Sigmoid colon (tissue), 7 donors: ENCODE measurements at regions of chr5 and their contacts with region 1.

Region 1: DNA sequence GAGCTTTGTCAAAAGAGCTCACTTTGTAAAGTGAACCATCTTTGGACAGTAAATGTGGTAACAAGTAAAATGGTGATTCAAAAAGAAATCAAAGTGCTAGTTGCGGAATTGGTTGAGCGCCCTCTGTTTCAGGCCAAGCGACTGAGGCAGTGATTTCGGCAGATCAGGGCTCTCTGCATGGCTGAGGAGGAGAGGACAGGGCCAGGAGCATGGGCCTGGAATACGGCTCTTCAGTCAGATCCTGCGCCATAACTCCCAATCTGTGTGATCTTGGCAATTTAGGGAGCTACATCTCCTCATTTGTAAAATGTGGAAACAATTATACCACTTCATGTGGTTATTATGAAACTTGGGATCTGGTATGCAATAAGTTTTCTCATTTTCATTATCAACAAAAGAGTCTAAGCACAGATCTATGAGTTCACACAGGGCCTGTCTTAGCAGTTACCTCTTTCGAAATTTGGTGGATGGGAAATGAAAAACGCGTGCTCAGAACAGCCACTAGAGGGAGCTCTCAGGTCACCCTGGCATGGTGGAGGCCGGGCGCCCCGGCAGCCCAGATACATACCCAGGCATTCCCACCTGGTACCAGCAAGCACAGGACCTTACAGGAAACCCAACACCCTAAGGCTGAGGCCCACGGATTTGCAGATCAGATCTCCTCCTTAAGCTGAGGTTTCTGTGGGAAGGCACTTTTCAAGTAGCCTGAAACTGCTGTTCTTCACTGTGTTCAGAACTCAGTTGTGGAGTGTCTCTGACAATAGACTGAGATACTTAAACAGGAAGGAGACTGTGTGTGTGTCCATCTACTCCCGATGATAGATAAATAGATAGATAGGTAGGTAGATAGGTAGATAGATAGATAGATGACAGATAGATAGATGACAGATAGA is 303.7 kb downstream of the RAB3C start:
- DNase-seq: peak; percentile 81
- H3K4me3 ChIP-seq: no peak overlapping the region
- H3K27ac ChIP-seq: peak overlapping the region in 2 of 4 donors; percentile 4 to 20
- H3K4me1 ChIP-seq: peaks cover 0 to 12% (median 3%) of the 10 kb centered on the region in 4 donors
- H3K27me3 ChIP-seq: no peaks in the 10 kb centered on the region
- CTCF ChIP-seq: peak; percentile 62 to 94 (median 68)
- EP300 ChIP-seq: no peak
- POLR2A ChIP-seq: no peak

Region 2: GRCh38 chr5:58988938-58989337 is 102.4 kb after region 1 on chr5:
- intact Hi-C with region 1: loop called (anchors 5 kb)
- DNase-seq: no peak
- H3K4me3 ChIP-seq: no peak overlapping the region
- H3K27ac ChIP-seq: no peak overlapping the region
- H3K4me1 ChIP-seq: peaks cover 0 to 13% (median 0%) of the 10 kb centered on the region in 4 donors
- H3K27me3 ChIP-seq: no peaks in the 10 kb centered on the region
- CTCF ChIP-seq: no peak
- EP300 ChIP-seq: no peak
- POLR2A ChIP-seq: no peak

Region 3: DNA sequence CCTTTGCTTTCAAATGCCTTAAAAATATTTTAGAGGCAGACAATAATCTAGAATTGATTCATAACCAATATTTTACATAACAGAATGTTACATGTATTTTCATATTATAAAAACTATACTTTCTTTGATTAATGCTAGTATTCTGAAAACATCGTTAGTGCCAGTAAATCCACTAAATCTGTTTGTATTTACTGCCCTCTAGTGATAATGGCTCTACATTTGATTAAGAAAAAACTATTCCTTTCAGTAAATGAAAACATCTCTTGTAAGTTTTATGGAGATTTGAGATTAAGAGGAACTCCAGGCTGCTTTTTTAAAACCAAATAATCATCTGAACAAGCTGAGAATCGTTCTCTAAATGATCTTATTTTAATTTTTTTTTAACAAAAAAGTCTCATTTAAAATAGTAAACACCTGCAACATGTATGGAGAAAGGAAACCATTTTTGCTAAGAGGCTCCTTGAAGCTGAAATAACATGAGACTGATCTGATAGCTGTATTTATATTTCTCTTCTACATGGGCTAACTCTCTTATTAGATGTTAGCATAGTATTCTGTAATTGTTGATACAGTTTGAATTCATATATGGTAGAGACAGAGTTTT is 121.0 kb after region 1 on chr5:
- intact Hi-C with region 1: loop called (anchors 5 kb)
- DNase-seq: no peak
- H3K4me3 ChIP-seq: no peak overlapping the region
- H3K27ac ChIP-seq: peak overlapping the region in 2 of 4 donors; percentile 0 to 44
- H3K4me1 ChIP-seq: peaks cover 0 to 55% (median 47%) of the 10 kb centered on the region in 4 donors
- H3K27me3 ChIP-seq: no peaks in the 10 kb centered on the region
- CTCF ChIP-seq: peak in 1 of 4 experiments; percentile 15
- EP300 ChIP-seq: no peak
- POLR2A ChIP-seq: no peak

Region 4: GRCh38 chr5:59174248-59174844 is 287.8 kb after region 1 on chr5:
- intact Hi-C with region 1: loop called (anchors 2 kb)
- DNase-seq: no peak
- H3K4me3 ChIP-seq: no peak overlapping the region
- H3K27ac ChIP-seq: peak overlapping the region in 2 of 4 donors; percentile 8 to 26
- H3K4me1 ChIP-seq: peaks cover 0 to 22% (median 19%) of the 10 kb centered on the region in 4 donors
- H3K27me3 ChIP-seq: no peaks in the 10 kb centered on the region
- CTCF ChIP-seq: peak; percentile 57 to 73 (median 64)
- EP300 ChIP-seq: no peak
- POLR2A ChIP-seq: no peak

Region 5: DNA sequence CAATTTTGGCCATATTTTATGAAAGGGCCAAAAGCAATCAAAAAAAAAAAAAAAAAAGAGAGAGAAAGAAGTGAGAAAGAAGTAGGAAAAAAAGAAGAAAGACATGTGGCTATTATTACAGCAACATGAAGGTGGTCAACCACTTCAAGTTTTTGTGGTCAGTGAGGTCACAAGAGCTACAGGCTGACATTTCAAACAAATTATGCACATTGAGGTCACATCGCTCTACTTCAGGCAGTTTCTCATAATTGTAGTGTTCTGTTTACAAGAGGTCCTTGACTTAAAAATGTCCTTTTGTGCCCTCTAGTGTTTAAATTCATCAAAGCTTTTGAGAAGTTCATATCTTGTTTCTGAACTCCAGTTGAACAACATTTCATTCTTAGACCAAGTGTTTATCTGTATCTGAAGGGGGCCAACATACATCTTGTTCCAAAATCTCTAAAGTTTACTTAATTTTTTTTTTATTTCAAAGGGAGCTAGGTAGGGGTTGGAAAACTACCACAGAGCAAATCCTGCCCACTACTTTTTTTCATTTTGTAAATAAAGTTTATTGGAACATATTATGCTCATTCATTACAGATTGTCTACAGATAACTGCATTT is 493.9 kb after region 1 on chr5:
- intact Hi-C with region 1: loop called (anchors 5 kb)
- DNase-seq: no peak
- H3K4me3 ChIP-seq: no peak overlapping the region
- H3K27ac ChIP-seq: peak overlapping the region in 3 of 4 donors; percentile 50 to 62 (median 60)
- H3K4me1 ChIP-seq: peaks cover 0 to 20% (median 11%) of the 10 kb centered on the region in 4 donors
- H3K27me3 ChIP-seq: no peaks in the 10 kb centered on the region
- CTCF ChIP-seq: peak; percentile 32 to 59 (median 42)
- EP300 ChIP-seq: no peak
- POLR2A ChIP-seq: no peak

Region 6: GRCh38 chr5:59673438-59674058 is 787.0 kb after region 1 on chr5:
- intact Hi-C with region 1: loop called (anchors 10 kb)
- DNase-seq: no peak
- H3K4me3 ChIP-seq: no peak overlapping the region
- H3K27ac ChIP-seq: no peak overlapping the region
- H3K4me1 ChIP-seq: peaks cover 0 to 26% (median 11%) of the 10 kb centered on the region in 4 donors
- H3K27me3 ChIP-seq: no peaks in the 10 kb centered on the region
- CTCF ChIP-seq: peak; percentile 56 to 81 (median 74)
- EP300 ChIP-seq: no peak
- POLR2A ChIP-seq: no peak

Region 7: GRCh38 chr5:59799668-59800346 is 913.2 kb after region 1 on chr5:
- intact Hi-C with region 1: loop called (anchors 5 kb)
- DNase-seq: no peak
- H3K4me3 ChIP-seq: peak overlapping the region in 1 of 4 donors; percentile 22
- H3K27ac ChIP-seq: peak overlapping the region in 3 of 4 donors; percentile 59 to 74 (median 64)
- H3K4me1 ChIP-seq: peaks cover 0 to 28% (median 27%) of the 10 kb centered on the region in 4 donors
- H3K27me3 ChIP-seq: no peaks in the 10 kb centered on the region
- CTCF ChIP-seq: peak; percentile 67 to 83 (median 74)
- EP300 ChIP-seq: no peak
- POLR2A ChIP-seq: no peak